ENCODE measurements at regions of chr7 and their contacts with region 1.

Region 1: DNA sequence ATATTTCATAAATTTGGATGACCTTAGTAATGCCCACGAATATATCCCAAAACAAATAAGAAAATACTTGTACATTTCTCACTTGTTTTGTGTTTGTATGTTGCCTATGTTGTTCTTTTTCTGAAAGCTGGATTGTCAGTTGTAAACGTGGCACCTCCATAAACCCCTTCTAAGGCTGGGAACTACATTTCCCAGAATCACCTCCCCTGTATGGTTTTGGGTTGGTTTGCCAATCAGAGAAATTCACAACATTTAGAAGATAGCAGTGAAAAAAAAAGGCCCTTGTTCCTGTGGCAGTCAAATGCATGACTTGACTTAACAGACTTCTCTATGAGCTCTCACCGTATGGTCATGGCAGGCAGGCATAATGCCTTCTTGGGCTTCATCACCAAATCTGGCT is 676.3 kb upstream of the STEAP1 start:
- DNase-seq: no peak
- ATAC-seq: no peak
- H3K4me3 ChIP-seq: no peak overlapping the region
- H3K4me3 Mint-ChIP-seq: no peak overlapping the region
- H3K27ac ChIP-seq: no peak overlapping the region
- H3K27ac Mint-ChIP-seq: no peak overlapping the region
- H3K4me1 ChIP-seq: no peaks in the 10 kb centered on the region
- H3K4me1 Mint-ChIP-seq: peaks cover 0 to 17% (median 0%) of the 10 kb centered on the region in 7 donors
- H3K27me3 ChIP-seq: no peaks in the 10 kb centered on the region
- H3K27me3 Mint-ChIP-seq: no peaks in the 10 kb centered on the region

Region 2: GRCh38 chr7:89002981-89003956 is 474.7 kb before region 1 on chr7:
- CTCF ChIA-PET with region 1: no interaction called
- POLR2A ChIA-PET with region 1: no interaction called
- intact Hi-C with region 1: loop called in 1 of 2 experiments (anchors 10 kb)
- DNase-seq: peak in 3 of 9 donors; percentile 7 to 22 (median 17)
- ATAC-seq: peak; percentile 53
- H3K4me3 ChIP-seq: peak overlapping the region; percentile 54
- H3K4me3 Mint-ChIP-seq: peak overlapping the region; percentile 63 to 90 (median 86)
- H3K27ac ChIP-seq: peak overlapping the region; percentile 33
- H3K27ac Mint-ChIP-seq: peak overlapping the region; percentile 40 to 89 (median 78)
- H3K4me1 ChIP-seq: no peaks in the 10 kb centered on the region
- H3K4me1 Mint-ChIP-seq: peaks cover 10 to 26% (median 19%) of the 10 kb centered on the region in 7 donors
- H3K27me3 ChIP-seq: no peaks in the 10 kb centered on the region
- H3K27me3 Mint-ChIP-seq: peaks cover 0 to 6% (median 0%) of the 10 kb centered on the region in 5 donors

Region 3: GRCh38 chr7:89514970-89515369 is 37.0 kb after region 1 on chr7:
- CTCF ChIA-PET with region 1: no interaction called
- POLR2A ChIA-PET with region 1: no interaction called
- intact Hi-C with region 1: no loop called
- DNase-seq: no peak
- ATAC-seq: no peak
- H3K4me3 ChIP-seq: no peak overlapping the region
- H3K4me3 Mint-ChIP-seq: no peak overlapping the region
- H3K27ac ChIP-seq: no peak overlapping the region
- H3K27ac Mint-ChIP-seq: no peak overlapping the region
- H3K4me1 ChIP-seq: no peaks in the 10 kb centered on the region
- H3K4me1 Mint-ChIP-seq: no peaks in the 10 kb centered on the region
- H3K27me3 ChIP-seq: peaks cover 0 to 3% of the 10 kb centered on the region in 2 donors
- H3K27me3 Mint-ChIP-seq: no peaks in the 10 kb centered on the region